Activated B cell treated with CpG ODN at 0.5 μM for 24 hours (primary cell): ENCODE measurements at regions of chr4 and their contacts with region 1.

Region 1: GRCh38 chr4:67700738-67701516 is at the start of gene UBA6:
- DNase-seq: peak; percentile 89
- ATAC-seq: peak; percentile 95
- H3K4me3 Mint-ChIP-seq: peak within 1 kb of the TSS; percentile 92
- H3K27ac Mint-ChIP-seq: peak within 1 kb of the TSS; percentile 94
- H3K4me1 Mint-ChIP-seq: peaks cover 61% of the 10 kb centered on the region
- H3K27me3 Mint-ChIP-seq: no peaks in the 10 kb centered on the region
- CTCF ChIP-seq: no peak
- total RNA-seq, gene UBA6: 63.0 and 70.4 TPM in 2 replicates

Region 2: DNA sequence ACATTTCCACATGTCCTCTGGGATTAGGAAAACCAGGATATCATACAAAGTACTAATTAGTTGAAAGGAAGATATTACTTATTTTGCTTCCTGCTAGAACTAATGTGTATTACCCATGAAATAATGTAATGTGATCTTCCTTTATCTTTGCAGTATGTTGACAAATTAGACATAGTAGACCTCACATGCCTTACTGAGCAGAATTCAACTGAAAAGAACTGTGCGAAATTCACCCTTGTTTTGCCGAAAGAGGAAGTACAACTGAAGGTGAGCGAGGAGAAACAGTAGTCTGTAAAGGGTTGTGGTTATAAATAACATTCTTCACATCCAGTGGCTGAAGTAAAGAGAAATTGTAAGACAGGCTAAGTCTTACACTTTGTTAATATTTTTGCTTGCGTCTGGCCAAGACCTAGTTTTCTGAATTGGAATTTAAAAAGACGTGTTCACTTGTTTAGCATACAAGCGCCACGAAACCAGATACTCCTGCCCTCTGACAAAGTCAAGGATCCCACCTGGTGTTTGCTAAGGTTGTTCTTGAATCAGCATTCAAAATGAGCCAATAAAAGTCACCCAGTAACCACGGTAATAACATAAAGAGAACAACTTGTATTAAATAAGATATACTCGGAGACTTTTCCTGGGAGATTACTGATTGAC is 125.6 kb before region 1 on chr4:
- CTCF ChIA-PET with region 1: no interaction called
- POLR2A ChIA-PET with region 1: no interaction called
- intact Hi-C with region 1: loop called (anchors 1 kb)
- DNase-seq: no peak
- ATAC-seq: peak; percentile 91
- H3K4me3 Mint-ChIP-seq: peak overlapping the region; percentile 71
- H3K27ac Mint-ChIP-seq: peak overlapping the region; percentile 90
- H3K4me1 Mint-ChIP-seq: peaks cover 68% of the 10 kb centered on the region
- H3K27me3 Mint-ChIP-seq: no peaks in the 10 kb centered on the region
- CTCF ChIP-seq: no peak

Region 3: GRCh38 chr4:67603310-67604028 is 97.5 kb before region 1 on chr4:
- CTCF ChIA-PET with region 1: no interaction called
- POLR2A ChIA-PET with region 1: no interaction called
- intact Hi-C with region 1: no loop called
- DNase-seq: no peak
- ATAC-seq: no peak
- H3K4me3 Mint-ChIP-seq: no peak overlapping the region
- H3K27ac Mint-ChIP-seq: peak overlapping the region; percentile 8
- H3K4me1 Mint-ChIP-seq: peaks cover 18% of the 10 kb centered on the region
- H3K27me3 Mint-ChIP-seq: no peaks in the 10 kb centered on the region
- CTCF ChIP-seq: no peak

Region 4: DNA sequence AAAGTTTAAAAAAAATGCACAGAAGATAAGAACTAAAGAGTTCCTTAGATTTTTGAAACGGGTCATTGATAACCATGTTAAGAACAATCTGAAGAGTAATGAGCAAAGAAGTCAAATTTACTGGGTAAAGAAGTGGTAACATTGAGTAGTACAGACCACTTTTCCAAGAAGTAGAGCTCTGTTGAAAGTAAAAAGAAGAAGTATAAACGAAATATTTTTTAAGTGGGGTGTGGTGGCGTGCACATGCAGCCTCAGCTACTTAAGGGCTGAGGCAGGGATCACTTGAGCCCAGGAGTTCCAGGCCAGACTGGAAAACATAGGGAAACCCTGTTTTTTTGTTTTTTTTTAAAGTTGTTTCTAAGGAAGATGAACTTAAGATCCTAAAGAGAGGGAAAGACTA is 68.4 kb before region 1 on chr4:
- CTCF ChIA-PET with region 1: no interaction called
- POLR2A ChIA-PET with region 1: no interaction called
- intact Hi-C with region 1: loop called (anchors 2 kb)
- DNase-seq: no peak
- ATAC-seq: peak; percentile 96
- H3K4me3 Mint-ChIP-seq: peak overlapping the region; percentile 64
- H3K27ac Mint-ChIP-seq: peak overlapping the region; percentile 72
- H3K4me1 Mint-ChIP-seq: peaks cover 19% of the 10 kb centered on the region
- H3K27me3 Mint-ChIP-seq: no peaks in the 10 kb centered on the region
- CTCF ChIP-seq: no peak

Region 5: GRCh38 chr4:67684839-67685531 is 15.9 kb before region 1 on chr4:
- CTCF ChIA-PET with region 1: interaction called, 3 read pairs
- POLR2A ChIA-PET with region 1: no interaction called
- intact Hi-C with region 1: loop called (anchors 2 kb)
- DNase-seq: no peak
- ATAC-seq: no peak
- H3K4me3 Mint-ChIP-seq: no peak overlapping the region
- H3K27ac Mint-ChIP-seq: no peak overlapping the region
- H3K4me1 Mint-ChIP-seq: no peaks in the 10 kb centered on the region
- H3K27me3 Mint-ChIP-seq: no peaks in the 10 kb centered on the region
- CTCF ChIP-seq: no peak

Region 6: GRCh38 chr4:67714248-67714583 is 13.3 kb after region 1 on chr4:
- CTCF ChIA-PET with region 1: no interaction called
- POLR2A ChIA-PET with region 1: no interaction called
- intact Hi-C with region 1: loop called (anchors 1 kb)
- DNase-seq: no peak
- ATAC-seq: peak; percentile 69
- H3K4me3 Mint-ChIP-seq: no peak overlapping the region
- H3K27ac Mint-ChIP-seq: peak overlapping the region; percentile 41
- H3K4me1 Mint-ChIP-seq: peaks cover 11% of the 10 kb centered on the region
- H3K27me3 Mint-ChIP-seq: no peaks in the 10 kb centered on the region
- CTCF ChIP-seq: no peak

Region 7: DNA sequence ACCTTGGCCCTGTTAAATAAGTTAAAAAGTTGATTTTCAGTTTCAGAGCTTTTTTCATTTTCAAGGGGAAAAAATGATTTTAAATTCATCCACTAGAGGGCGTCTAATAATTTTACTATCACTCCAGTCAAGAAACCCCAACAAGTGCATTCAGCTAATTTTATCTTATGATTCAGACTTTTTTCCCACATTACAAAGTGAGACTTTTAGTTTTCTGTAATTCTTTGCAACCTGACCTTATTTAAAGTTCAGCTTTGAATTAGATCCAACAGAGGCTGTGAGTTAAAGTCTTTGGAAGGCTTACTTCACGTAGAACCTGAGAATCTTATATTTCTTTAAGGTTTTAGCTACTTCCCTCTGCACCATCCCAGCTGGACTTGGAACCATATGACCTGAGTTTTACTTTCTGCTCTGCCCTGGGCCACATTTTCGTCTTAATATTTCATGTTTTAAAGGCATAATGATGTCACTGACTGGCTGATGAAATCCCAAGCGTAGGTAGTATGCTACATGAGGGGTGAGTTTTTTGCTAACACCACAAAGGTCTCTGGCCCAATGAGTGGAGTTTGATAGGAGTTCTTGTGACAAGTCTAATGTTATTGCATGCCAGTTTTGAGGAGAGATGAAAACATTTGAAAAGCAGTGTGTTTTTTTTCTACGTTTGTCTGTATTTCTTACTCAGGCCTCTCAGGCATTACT is 46.0 kb after region 1 on chr4:
- CTCF ChIA-PET with region 1: interaction called, 6 read pairs
- POLR2A ChIA-PET with region 1: interaction called, 7 read pairs
- intact Hi-C with region 1: loop called (anchors 1 kb)
- DNase-seq: no peak
- ATAC-seq: no peak
- H3K4me3 Mint-ChIP-seq: no peak overlapping the region
- H3K27ac Mint-ChIP-seq: no peak overlapping the region
- H3K4me1 Mint-ChIP-seq: peaks cover 5% of the 10 kb centered on the region
- H3K27me3 Mint-ChIP-seq: no peaks in the 10 kb centered on the region
- CTCF ChIP-seq: no peak

Region 8: GRCh38 chr4:67770422-67770821 is 69.5 kb after region 1 on chr4:
- CTCF ChIA-PET with region 1: no interaction called
- POLR2A ChIA-PET with region 1: no interaction called
- intact Hi-C with region 1: no loop called
- DNase-seq: no peak
- ATAC-seq: no peak
- H3K4me3 Mint-ChIP-seq: no peak overlapping the region
- H3K27ac Mint-ChIP-seq: no peak overlapping the region
- H3K4me1 Mint-ChIP-seq: no peaks in the 10 kb centered on the region
- H3K27me3 Mint-ChIP-seq: no peaks in the 10 kb centered on the region
- CTCF ChIP-seq: no peak

Region 9: DNA sequence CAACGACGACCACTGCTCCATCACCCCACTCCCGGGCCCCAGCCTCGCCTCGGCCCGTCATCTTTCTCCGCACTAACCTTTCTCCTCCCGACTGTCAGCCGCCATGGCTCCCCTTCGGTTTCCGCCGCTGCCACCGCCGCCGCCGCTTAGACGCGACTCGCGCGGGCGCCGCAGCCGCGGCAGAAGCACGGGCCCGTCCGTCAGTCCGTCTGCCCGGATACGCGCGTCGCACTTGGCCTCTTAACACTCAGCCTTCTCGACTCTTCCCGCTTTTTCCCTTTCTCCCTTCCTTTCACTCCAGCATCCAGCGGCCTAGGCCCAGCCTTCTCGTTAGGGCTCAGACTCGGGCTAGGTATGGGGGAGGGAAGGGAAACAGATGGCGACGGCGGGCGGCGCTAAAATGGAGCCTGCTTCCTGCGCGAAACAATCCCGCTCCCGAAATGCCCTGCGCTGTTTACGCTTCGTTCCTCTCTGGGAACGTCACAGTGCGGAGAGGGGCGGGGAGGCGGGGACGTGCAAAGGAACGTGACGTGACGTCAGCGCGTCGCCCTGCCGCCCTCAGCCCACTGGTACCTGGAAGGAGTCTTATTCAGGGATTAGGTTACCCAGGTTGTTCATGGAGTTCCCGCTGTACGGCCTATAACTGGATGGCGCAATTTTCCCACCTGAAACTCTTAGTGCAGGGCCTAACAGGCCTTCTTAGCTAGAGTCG is 648.9 kb after region 1 on chr4 and contains the start of gene YTHDC1:
- CTCF ChIA-PET with region 1: no interaction called
- POLR2A ChIA-PET with region 1: no interaction called
- intact Hi-C with region 1: loop called (anchors 1 kb)
- DNase-seq: peak; percentile 87
- ATAC-seq: peak; percentile 95
- H3K4me3 Mint-ChIP-seq: peak within 1 kb of the TSS; percentile 99
- H3K27ac Mint-ChIP-seq: peak within 1 kb of the TSS; percentile 99
- H3K4me1 Mint-ChIP-seq: peaks cover 38% of the 10 kb centered on the region
- H3K27me3 Mint-ChIP-seq: peaks cover 3% of the 10 kb centered on the region
- CTCF ChIP-seq: no peak
- total RNA-seq, gene YTHDC1: 101 and 119 TPM in 2 replicates